CD8-positive, alpha-beta T cell (primary cell): ENCODE measurements at regions of chr12 and their contacts with region 1.

Region 1: DNA sequence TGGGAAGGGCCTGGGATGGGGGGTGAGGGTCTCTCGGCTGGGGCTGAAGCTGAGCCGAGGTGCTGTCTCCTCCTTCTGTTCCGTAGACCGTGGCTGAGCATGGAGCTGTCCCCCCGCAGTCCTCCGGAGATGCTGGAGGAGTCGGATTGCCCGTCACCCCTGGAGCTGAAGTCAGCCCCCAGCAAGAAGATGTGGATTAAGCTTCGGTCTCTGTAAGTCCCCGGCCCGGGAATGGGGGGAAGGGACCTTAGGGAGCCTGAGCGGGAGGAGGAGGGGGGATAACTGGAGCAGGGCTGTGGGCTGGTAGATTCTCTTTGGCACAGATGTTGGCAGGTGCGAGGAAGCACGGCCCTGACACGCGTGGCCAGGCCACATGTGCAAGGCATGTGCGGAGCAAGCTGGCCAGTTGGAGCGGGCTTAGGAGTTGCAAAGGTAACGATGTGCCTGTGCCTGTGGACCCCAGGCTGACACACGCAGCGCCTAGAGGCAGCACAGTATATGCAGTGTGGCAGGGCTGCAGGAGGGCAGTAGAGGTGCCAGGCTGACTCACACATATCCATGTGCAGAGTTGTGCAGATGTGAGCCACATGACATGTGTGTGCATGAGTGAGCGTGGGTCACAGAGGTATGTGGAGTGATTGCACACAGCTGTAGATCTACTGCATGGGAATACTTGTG is 512 bp downstream of the PDE1B start:
- DNase-seq: peak in 5 of 9 experiments; percentile 9 to 53 (median 23)
- ATAC-seq: peak; percentile 72
- H3K4me3 ChIP-seq: peak overlapping the region; percentile 45 to 65
- H3K4me3 Mint-ChIP-seq: peak overlapping the region; percentile 87
- H3K27ac ChIP-seq: no peak overlapping the region
- H3K27ac Mint-ChIP-seq: no peak overlapping the region
- H3K4me1 ChIP-seq: peaks cover 9% of the 10 kb centered on the region
- H3K4me1 Mint-ChIP-seq: peaks cover 20% of the 10 kb centered on the region
- H3K27me3 ChIP-seq: no peaks in the 10 kb centered on the region
- H3K27me3 Mint-ChIP-seq: peaks cover 2% of the 10 kb centered on the region
- CTCF ChIP-seq: no peak

Region 2: DNA sequence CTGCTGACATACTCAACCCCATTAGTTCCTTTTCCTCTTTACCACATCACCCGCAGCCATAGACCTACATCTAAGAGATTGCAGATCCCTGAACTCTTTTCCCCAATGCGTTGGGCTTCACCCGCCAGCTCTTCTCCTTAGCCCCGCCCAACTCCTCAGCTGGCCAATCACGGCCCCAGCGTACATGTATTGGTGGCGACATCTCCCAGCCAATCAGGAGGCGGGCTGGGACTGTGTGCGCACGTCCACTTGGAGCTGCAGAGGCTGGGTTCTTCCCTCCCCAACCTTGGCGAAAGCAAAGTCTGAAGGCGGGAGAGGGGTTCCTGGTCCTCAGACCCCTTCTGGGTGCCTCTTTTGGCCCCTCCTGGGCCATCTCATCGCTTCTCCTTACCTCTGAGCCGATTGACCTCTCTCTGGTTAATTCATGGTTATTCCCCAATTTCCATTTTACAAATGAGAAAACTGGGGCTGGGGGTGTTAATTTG is 10.5 kb after region 1 on chr12:
- CTCF ChIA-PET with region 1: interaction called, 3 read pairs
- POLR2A ChIA-PET with region 1: interaction called, 22 read pairs
- intact Hi-C with region 1: no loop called
- DNase-seq: peak; percentile 62 to 92 (median 83)
- ATAC-seq: peak; percentile 100
- H3K4me3 ChIP-seq: peak overlapping the region; percentile 53 to 58
- H3K4me3 Mint-ChIP-seq: peak overlapping the region; percentile 86
- H3K27ac ChIP-seq: peak overlapping the region; percentile 36 to 62
- H3K27ac Mint-ChIP-seq: peak overlapping the region; percentile 89
- H3K4me1 ChIP-seq: peaks cover 19% of the 10 kb centered on the region
- H3K4me1 Mint-ChIP-seq: peaks cover 18% of the 10 kb centered on the region
- H3K27me3 ChIP-seq: no peaks in the 10 kb centered on the region
- H3K27me3 Mint-ChIP-seq: no peaks in the 10 kb centered on the region
- CTCF ChIP-seq: no peak

Region 3: GRCh38 chr12:54579696-54580333 is 29.9 kb after region 1 on chr12:
- CTCF ChIA-PET with region 1: interaction called, 13 read pairs
- POLR2A ChIA-PET with region 1: no interaction called
- intact Hi-C with region 1: no loop called
- DNase-seq: peak; percentile 66 to 87 (median 80)
- ATAC-seq: peak; percentile 98
- H3K4me3 ChIP-seq: no peak overlapping the region
- H3K4me3 Mint-ChIP-seq: no peak overlapping the region
- H3K27ac ChIP-seq: no peak overlapping the region
- H3K27ac Mint-ChIP-seq: no peak overlapping the region
- H3K4me1 ChIP-seq: peaks cover 6% of the 10 kb centered on the region
- H3K4me1 Mint-ChIP-seq: peaks cover 5% of the 10 kb centered on the region
- H3K27me3 ChIP-seq: no peaks in the 10 kb centered on the region
- H3K27me3 Mint-ChIP-seq: peaks cover 9% of the 10 kb centered on the region
- CTCF ChIP-seq: peak; percentile 97